ENCODE measurements at regions of chr3 and their contacts with region 1.

Region 1: GRCh38 chr3:134197681-134198261 is 52.9 kb downstream of the RYK start:
- DNase-seq: peak; percentile 14
- H3K4me3 Mint-ChIP-seq: no peak overlapping the region
- H3K27ac Mint-ChIP-seq: no peak overlapping the region
- H3K4me1 Mint-ChIP-seq: peaks cover 7% of the 10 kb centered on the region
- H3K27me3 Mint-ChIP-seq: no peaks in the 10 kb centered on the region

Region 2: DNA sequence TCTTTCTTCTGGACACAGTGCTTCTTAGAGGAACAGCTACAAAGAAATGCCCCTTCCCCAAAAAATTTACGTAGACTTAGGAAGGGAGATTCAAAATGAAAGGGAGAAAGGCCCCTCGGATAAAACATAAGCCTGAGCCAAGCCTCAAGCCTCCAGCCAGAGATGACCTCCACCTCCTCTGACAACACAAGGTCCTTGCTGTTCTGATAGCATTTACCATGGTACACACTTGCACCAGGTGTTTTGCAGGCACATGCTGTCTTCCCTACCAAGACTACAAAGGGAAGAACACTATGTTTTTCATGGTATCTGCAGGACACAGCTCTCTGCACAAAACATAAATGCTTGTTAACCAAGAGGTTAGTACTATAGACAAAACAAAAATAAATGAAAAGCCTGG is 25.1 kb after region 1 on chr3:
- CTCF ChIA-PET with region 1: interaction called, 10 read pairs
- intact Hi-C with region 1: no loop called
- DNase-seq: no peak
- H3K4me3 Mint-ChIP-seq: no peak overlapping the region
- H3K27ac Mint-ChIP-seq: no peak overlapping the region
- H3K4me1 Mint-ChIP-seq: peaks cover 30% of the 10 kb centered on the region
- H3K27me3 Mint-ChIP-seq: no peaks in the 10 kb centered on the region

Region 3: DNA sequence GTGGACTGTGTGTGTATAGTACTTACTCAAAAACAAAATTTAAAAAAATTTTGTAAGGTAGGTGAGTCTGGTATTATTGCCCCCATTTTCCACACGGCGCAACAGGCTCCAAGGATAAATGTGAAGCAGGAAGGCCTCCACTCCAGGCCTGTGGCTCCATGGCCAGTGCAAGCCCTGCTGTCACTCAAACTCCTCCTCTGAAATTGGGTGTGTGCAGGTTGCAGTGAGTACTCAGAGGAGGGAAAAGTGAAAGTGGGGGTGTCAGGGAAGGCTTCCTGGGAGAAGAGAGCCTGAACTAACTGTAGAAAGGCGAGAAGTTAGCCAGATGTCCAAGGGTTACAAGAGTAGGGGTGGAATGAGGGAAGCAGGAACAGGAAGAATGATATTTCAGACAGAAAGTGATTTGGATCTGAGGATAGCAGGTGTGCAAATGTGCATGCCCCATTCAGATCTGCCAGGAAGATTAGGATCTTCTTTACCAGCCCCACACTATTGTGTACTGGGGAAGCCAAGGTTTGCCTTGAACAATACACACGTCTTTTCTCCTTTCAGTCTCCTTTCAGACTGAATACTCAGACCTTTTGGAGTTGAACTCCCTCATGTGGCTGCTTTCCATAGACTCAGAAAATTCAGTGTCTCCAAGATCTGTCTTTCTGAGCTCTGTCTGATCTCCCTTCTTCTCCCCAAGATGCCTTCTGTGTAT is 101.6 kb after region 1 on chr3:
- CTCF ChIA-PET with region 1: interaction called, 6 read pairs
- intact Hi-C with region 1: loop called (anchors 1 kb)
- DNase-seq: no peak
- H3K4me3 Mint-ChIP-seq: no peak overlapping the region
- H3K27ac Mint-ChIP-seq: no peak overlapping the region
- H3K4me1 Mint-ChIP-seq: no peaks in the 10 kb centered on the region
- H3K27me3 Mint-ChIP-seq: peaks cover 11% of the 10 kb centered on the region

Region 4: DNA sequence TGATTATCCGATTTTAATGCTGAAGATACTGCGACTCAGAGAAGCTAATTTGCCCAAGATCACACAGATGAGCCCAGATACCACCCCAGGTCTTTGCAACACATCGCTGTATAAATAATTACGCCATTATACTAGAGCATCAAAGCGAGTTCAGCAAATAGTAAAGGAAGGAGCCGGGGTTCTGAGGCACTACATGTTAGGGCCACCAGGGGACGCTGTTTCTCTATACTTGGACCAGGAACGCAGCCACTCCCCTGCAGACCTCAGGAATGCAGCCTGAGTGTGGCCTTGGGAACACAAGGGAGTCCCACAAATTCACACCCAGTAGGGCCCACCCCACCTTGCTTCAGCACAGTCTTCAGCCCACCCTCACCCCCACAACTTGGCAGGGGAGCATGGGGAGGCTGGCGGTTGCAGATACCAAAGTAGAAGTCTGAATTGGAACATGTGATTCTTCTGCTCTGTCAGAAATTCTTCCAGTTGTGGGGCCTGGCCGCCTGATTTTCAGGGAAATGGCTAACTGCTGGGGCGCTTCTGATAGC is 110.7 kb after region 1 on chr3:
- CTCF ChIA-PET with region 1: interaction called, 5 read pairs
- intact Hi-C with region 1: loop called (anchors 1 kb)
- DNase-seq: peak; percentile 86
- H3K4me3 Mint-ChIP-seq: no peak overlapping the region
- H3K27ac Mint-ChIP-seq: no peak overlapping the region
- H3K4me1 Mint-ChIP-seq: peaks cover 2% of the 10 kb centered on the region
- H3K27me3 Mint-ChIP-seq: peaks cover 20% of the 10 kb centered on the region

Region 5: DNA sequence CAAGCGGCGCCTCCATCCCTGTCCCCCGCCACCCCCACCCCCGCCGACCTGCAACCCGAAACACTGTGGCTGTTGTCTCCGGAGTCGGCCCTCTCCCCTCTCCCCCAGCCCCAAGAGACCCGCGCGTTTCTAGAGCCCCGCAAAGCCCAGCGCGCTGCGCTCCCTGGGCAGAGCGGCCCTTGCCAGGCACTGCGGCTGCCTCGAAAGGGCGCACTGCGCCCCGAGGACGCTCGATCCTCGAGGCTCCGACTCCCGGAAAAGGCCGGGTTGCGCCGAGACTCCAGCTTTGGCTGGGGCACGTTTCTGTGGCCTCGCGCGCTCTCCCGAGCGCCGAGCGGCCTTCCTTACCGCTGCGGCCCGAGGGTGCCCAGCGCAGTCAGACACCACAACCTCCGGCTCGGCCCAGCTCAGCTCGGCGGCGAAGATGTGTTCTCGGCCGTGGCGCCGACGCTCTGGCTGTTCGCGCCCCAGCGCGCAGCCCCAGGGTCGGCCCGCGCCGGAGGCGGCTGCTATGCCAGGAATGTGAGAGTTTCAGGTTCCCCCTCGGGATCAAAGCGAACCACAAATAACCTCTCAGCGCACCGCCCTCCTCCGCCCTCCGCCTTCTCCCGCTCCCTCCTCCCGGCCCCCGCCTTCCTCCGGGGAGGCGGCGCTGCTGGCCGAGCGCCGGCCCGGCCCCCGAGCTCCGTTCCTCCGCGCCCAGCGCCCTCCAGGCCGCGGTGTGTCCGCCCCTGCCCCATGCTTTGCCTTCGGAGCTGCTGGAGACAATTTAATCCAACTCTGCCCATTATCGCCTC is 176.4 kb after region 1 on chr3 and contains the start of gene AMOTL2:
- CTCF ChIA-PET with region 1: no interaction called
- intact Hi-C with region 1: loop called (anchors 5 kb)
- DNase-seq: peak; percentile 31
- H3K4me3 Mint-ChIP-seq: peak within 1 kb of the TSS; percentile 79
- H3K27ac Mint-ChIP-seq: no peak within 1 kb of the TSS
- H3K4me1 Mint-ChIP-seq: peaks cover 14% of the 10 kb centered on the region
- H3K27me3 Mint-ChIP-seq: peaks cover 28% of the 10 kb centered on the region
- total RNA-seq, gene AMOTL2: 0.31 TPM in 1 of 2 experiments, not detected in the other